Vagina (tissue), 2 donors: ENCODE measurements at regions of chr2 and their contacts with region 1.

Region 1: DNA sequence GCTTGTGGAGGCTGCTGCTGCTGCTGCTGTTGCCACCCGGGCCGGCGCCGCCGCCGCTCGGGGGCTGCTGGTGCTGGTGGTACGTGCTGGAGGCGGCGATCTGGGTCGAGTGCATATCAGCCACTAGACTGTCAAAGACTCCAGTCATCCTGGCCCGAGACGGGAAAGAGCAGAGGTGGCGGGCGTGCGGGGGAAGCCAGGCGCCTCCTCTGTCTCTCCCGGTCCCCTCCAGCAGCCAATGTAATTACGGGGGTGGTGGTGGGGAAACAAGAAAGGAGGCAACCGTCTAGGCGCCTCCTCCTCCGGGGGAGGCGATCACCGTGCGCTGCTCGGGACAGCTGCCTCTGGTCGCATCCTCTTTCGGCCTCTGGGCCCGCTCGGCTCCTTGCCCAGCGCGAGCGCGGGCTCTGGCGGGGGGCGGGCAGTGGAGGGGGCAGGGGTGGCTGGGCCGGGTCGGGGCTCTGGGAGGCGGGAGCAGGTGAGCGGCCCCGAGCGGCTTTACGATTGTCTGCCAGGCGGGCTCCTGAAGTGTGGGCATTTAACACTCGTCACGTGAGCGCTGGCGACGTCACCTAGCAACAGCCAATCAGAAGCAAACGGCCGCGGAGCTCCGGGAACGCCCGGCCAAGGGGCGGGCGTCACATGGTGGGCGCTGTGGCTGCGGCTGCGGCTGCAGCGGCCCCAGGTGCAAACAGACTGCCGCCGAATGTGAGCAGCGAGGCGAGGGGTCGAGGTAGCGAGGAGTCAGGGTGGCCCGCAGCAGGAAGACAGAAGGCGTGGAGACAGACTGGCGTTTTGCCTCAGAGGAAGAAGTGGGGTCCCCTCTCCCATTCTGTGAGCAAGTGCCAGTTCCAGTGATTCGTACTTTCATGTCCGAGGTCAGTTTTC is at the start of gene DLX2:
- DNase-seq: no peak
- H3K4me3 ChIP-seq: peak within 1 kb of the TSS; percentile 41 to 48
- H3K27ac ChIP-seq: no peak within 1 kb of the TSS
- H3K4me1 ChIP-seq: peaks cover 70% of the 10 kb centered on the region
- H3K27me3 ChIP-seq: peaks cover 40% of the 10 kb centered on the region
- CTCF ChIP-seq: no peak
- POLR2A ChIP-seq: no peak
- total RNA-seq, gene DLX2: not detected

Region 2: DNA sequence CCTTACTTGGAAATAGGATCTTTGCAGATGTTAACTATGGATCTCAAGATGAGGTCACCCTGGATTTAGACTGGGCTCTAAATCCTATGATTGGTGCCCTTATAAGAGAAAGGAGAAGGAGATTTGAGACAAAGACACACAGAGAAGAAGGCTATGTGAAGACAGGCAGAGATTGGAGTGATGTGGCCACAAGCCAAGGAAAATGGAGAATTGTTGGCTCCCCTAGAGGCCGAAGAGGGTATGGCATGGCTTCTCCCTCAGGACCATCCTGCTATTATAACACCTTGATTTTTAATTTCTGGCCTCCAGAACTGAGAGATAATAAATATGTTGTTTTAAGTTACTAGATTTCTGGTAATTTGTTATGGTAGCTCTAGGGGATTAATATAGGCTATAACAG is 572.7 kb before region 1 on chr2:
- intact Hi-C with region 1: no loop called
- DNase-seq: no peak
- H3K4me3 ChIP-seq: no peak overlapping the region
- H3K27ac ChIP-seq: peak overlapping the region; percentile 59
- H3K4me1 ChIP-seq: peaks cover 80% of the 10 kb centered on the region
- H3K27me3 ChIP-seq: no peaks in the 10 kb centered on the region
- CTCF ChIP-seq: no peak
- POLR2A ChIP-seq: no peak

Region 3: GRCh38 chr2:171703574-171704347 is 398.9 kb before region 1 on chr2:
- intact Hi-C with region 1: loop called (anchors 10 kb)
- DNase-seq: no peak
- H3K4me3 ChIP-seq: no peak overlapping the region
- H3K27ac ChIP-seq: no peak overlapping the region
- H3K4me1 ChIP-seq: peaks cover 27% of the 10 kb centered on the region
- H3K27me3 ChIP-seq: no peaks in the 10 kb centered on the region
- CTCF ChIP-seq: peak in 1 of 3 experiments; percentile 12
- POLR2A ChIP-seq: no peak

Region 4: GRCh38 chr2:171811245-171811628 is 291.4 kb before region 1 on chr2:
- intact Hi-C with region 1: loop called (anchors 10 kb)
- DNase-seq: no peak
- H3K4me3 ChIP-seq: no peak overlapping the region
- H3K27ac ChIP-seq: no peak overlapping the region
- H3K4me1 ChIP-seq: no peaks in the 10 kb centered on the region
- H3K27me3 ChIP-seq: no peaks in the 10 kb centered on the region
- CTCF ChIP-seq: peak in 2 of 3 experiments; percentile 22 to 34
- POLR2A ChIP-seq: no peak

Region 5: DNA sequence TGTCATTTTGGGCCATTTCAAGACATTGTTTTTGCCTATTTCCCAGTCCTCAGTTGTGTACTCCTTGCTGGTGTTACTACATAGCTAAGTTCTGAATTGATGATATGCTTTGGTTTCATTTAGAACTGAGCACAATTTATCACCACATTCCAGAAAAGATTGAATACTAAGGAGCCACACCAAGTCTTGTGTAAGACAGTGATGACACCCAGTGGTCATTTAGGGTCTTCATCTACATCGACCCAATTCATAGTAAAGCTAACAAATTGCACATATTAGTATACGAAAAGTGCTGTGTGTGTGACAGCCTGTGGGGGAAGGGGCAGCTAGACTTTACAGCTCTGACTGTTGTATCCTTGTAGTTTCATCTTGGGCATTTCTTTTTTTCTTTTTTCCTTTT is 11.0 kb after region 1 on chr2:
- intact Hi-C with region 1: no loop called
- DNase-seq: no peak
- H3K4me3 ChIP-seq: no peak overlapping the region
- H3K27ac ChIP-seq: no peak overlapping the region
- H3K4me1 ChIP-seq: no peaks in the 10 kb centered on the region
- H3K27me3 ChIP-seq: peaks cover 4% of the 10 kb centered on the region
- CTCF ChIP-seq: peak in 2 of 3 experiments; percentile 27 to 35
- POLR2A ChIP-seq: no peak

Region 6: DNA sequence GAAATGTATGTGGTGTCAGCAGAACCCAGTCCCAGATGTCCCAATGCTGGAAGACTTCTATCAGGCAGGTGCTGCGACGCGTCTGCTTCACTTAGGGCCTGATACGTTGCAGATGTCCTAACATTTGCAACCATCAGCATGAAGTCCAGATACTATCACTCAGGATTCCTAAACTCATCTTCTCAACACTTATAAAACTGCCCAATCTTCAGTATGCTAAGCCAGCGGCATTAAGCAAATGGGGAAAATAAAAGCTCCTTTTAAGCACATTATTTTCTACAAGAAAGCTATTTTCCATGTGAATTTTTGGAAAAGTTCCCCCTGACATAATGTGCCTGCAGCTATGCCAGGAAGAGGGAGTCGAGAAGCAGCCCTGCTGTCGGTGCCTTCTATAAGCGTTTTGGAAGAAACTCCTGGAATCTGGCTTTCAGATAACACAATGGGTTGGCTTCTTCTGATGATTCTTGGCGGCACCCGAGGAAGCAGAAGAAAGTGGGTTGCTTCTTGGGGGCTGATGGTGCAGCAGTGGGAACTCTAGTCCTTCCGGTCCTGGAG is 264.0 kb after region 1 on chr2:
- intact Hi-C with region 1: no loop called
- DNase-seq: no peak
- H3K4me3 ChIP-seq: no peak overlapping the region
- H3K27ac ChIP-seq: no peak overlapping the region
- H3K4me1 ChIP-seq: no peaks in the 10 kb centered on the region
- H3K27me3 ChIP-seq: no peaks in the 10 kb centered on the region
- CTCF ChIP-seq: no peak
- POLR2A ChIP-seq: no peak